ENCODE measurements at regions of chr9 and their contacts with region 1.

Region 1: GRCh38 chr9:6584881-6585597 is 60.5 kb downstream of the GLDC start:
- DNase-seq: no peak
- ATAC-seq: peak; percentile 54
- H3K4me3 Mint-ChIP-seq: no peak overlapping the region
- H3K27ac Mint-ChIP-seq: no peak overlapping the region
- H3K4me1 Mint-ChIP-seq: peaks cover 41% of the 10 kb centered on the region
- H3K27me3 Mint-ChIP-seq: no peaks in the 10 kb centered on the region
- CTCF ChIP-seq: no peak

Region 2: DNA sequence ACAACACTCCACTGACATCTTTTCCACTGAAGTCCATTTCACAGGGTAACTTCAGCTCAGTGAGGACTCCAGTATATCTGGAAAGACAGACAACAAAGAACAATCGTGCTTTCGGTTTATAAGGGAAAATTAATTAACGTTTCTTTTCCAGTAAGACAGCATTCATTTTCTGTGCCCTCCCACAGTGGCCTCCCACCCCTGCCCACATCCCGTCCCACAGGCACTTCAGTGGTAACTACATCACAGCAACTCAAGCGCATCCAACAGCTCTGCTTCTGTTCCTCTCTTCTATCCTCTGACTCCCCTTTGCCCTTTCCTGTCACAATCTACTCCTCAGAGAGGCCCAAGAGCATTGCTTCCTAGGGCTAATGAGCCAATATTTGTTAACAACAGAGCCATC is 20.2 kb after region 1 on chr9:
- CTCF ChIA-PET with region 1: no interaction called
- POLR2A ChIA-PET with region 1: no interaction called
- intact Hi-C with region 1: loop called (anchors 2 kb)
- DNase-seq: peak; percentile 23
- ATAC-seq: peak; percentile 100
- H3K4me3 Mint-ChIP-seq: peak overlapping the region; percentile 64
- H3K27ac Mint-ChIP-seq: peak overlapping the region; percentile 14
- H3K4me1 Mint-ChIP-seq: peaks cover 15% of the 10 kb centered on the region
- H3K27me3 Mint-ChIP-seq: no peaks in the 10 kb centered on the region
- CTCF ChIP-seq: no peak

Region 3: DNA sequence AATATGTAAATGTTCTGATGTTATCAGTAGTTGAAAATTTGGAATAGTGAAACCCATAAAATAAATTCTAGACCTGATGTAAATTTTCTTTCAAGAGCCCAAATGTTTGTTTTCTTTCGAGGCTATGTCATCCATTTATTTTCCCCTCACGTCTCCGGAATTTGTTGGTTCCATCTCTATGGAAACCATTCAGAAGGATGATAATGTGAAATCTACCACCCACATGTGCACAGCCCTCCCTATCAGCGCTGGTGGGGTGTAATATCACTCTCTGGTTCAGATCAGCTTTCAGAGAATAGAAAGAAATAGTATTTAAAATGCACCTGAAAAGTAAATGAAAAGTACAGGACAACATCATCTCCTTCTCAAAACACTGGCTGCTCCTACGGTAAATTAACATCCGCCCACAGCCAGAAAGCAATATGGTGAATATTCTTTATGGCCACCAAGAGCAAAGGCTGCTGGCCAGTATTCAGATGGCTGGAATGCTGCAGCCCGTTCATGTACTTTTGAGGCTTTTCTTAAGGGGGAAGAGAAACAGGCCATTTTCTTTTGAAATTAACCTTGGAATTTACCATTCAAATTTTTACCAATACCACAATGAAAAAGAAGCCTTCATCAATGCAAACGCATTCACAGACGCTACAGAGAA is 32.0 kb after region 1 on chr9:
- CTCF ChIA-PET with region 1: no interaction called
- POLR2A ChIA-PET with region 1: no interaction called
- intact Hi-C with region 1: no loop called
- DNase-seq: no peak
- ATAC-seq: no peak
- H3K4me3 Mint-ChIP-seq: no peak overlapping the region
- H3K27ac Mint-ChIP-seq: no peak overlapping the region
- H3K4me1 Mint-ChIP-seq: peaks cover 15% of the 10 kb centered on the region
- H3K27me3 Mint-ChIP-seq: peaks cover 2% of the 10 kb centered on the region
- CTCF ChIP-seq: no peak

Region 4: DNA sequence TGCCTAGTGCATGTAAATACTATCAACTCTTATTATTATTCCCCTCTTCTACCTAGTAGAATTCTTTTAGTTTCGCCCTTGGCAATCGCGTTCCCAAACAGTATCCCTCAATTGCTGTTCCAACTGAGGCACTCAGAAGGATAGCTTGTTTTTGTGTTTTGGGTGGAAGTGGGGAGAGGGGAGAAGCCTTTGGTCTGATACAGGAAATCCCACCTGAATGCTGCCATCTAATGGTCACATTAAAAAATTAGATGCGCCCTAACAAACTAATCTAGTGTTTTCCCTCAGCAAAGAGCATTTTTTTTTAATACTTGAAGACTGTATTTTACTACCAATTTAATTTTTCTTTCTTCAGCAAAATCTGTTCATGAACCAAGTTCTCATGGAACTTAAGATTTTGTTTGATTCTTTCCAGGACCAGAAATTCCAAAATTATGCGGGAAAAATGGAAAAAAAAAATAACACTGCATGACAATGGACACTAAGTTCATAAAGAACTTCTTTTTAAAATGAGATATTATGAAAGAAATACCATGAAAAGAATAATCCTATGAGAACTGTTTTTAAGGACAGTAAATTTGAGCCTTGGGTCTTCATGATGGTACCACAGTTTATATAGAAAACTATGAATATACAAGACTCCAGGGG is 82.7 kb after region 1 on chr9:
- CTCF ChIA-PET with region 1: interaction called, 43 read pairs
- POLR2A ChIA-PET with region 1: no interaction called
- intact Hi-C with region 1: loop called (anchors 1 kb)
- DNase-seq: no peak
- ATAC-seq: peak; percentile 50
- H3K4me3 Mint-ChIP-seq: no peak overlapping the region
- H3K27ac Mint-ChIP-seq: no peak overlapping the region
- H3K4me1 Mint-ChIP-seq: peaks cover 7% of the 10 kb centered on the region
- H3K27me3 Mint-ChIP-seq: no peaks in the 10 kb centered on the region
- CTCF ChIP-seq: no peak

Region 5: DNA sequence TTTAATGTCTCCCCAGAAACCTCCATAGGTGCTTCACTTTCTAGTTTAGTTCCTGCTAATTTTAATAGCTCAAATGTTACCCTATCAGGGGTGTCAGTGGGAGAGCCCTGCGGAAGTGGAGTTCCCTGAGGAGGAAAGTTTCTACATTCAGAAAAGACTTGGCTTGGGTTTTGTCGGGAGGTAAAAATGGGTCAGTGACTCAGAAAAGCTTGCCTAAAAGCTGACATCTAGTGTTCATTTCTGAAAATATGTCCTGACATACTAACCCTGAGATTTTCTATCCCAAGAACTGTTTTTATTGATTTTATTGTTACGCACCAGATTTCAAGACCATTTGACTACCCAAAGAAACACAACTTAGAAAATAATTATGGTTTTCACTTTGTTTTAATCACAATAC is 101.4 kb after region 1 on chr9:
- CTCF ChIA-PET with region 1: interaction called, 19 read pairs
- POLR2A ChIA-PET with region 1: interaction called, 11 read pairs
- intact Hi-C with region 1: loop called (anchors 1 kb)
- DNase-seq: no peak
- ATAC-seq: no peak
- H3K4me3 Mint-ChIP-seq: peak overlapping the region; percentile 50
- H3K27ac Mint-ChIP-seq: peak overlapping the region; percentile 84
- H3K4me1 Mint-ChIP-seq: peaks cover 75% of the 10 kb centered on the region
- H3K27me3 Mint-ChIP-seq: no peaks in the 10 kb centered on the region
- CTCF ChIP-seq: no peak

Region 6: DNA sequence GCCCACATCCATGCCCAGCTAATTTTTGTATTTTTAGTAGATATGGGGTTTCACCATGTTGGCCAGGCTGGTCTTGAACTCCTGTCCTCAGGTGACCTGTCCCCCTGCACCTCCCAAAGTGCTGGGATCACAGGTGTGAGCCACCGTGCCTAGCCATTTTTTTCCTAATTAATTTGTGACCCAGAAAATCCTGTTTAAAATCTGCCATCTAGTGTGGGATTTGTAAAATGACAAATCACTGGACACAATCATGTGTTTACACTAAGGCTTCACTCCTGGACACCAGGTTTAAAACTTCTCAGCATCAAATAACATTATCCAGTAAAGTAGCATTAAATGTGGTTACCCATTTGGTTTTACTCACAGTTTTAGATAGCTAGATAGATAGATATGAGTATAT is 154.2 kb after region 1 on chr9:
- CTCF ChIA-PET with region 1: interaction called, 16 read pairs
- POLR2A ChIA-PET with region 1: interaction called, 7 read pairs
- intact Hi-C with region 1: loop called (anchors 1 kb)
- DNase-seq: no peak
- ATAC-seq: no peak
- H3K4me3 Mint-ChIP-seq: no peak overlapping the region
- H3K27ac Mint-ChIP-seq: no peak overlapping the region
- H3K4me1 Mint-ChIP-seq: peaks cover 13% of the 10 kb centered on the region
- H3K27me3 Mint-ChIP-seq: no peaks in the 10 kb centered on the region
- CTCF ChIP-seq: no peak

Region 7: DNA sequence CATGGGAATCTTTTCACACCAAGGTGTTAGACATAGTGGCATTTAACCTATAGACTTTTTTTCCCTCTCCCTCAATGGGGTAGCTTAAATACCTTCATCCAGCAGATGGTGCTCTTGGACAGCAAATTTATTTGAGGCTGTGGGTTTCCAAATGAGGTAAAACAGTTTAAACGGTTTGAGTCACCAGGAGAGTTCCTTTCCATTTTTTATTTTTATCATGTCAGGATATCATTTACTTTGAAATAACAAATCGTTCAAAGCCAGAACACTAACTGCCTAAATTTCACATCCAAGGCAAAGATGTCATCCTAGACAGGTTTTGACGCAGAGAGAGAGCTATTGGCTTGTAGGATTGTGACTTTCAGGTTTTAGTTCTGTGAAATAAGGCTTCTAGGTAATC is 242.4 kb after region 1 on chr9:
- CTCF ChIA-PET with region 1: interaction called, 3 read pairs
- POLR2A ChIA-PET with region 1: no interaction called
- intact Hi-C with region 1: loop called (anchors 1 kb)
- DNase-seq: no peak
- ATAC-seq: peak; percentile 42
- H3K4me3 Mint-ChIP-seq: no peak overlapping the region
- H3K27ac Mint-ChIP-seq: no peak overlapping the region
- H3K4me1 Mint-ChIP-seq: peaks cover 14% of the 10 kb centered on the region
- H3K27me3 Mint-ChIP-seq: no peaks in the 10 kb centered on the region
- CTCF ChIP-seq: no peak

Region 8: DNA sequence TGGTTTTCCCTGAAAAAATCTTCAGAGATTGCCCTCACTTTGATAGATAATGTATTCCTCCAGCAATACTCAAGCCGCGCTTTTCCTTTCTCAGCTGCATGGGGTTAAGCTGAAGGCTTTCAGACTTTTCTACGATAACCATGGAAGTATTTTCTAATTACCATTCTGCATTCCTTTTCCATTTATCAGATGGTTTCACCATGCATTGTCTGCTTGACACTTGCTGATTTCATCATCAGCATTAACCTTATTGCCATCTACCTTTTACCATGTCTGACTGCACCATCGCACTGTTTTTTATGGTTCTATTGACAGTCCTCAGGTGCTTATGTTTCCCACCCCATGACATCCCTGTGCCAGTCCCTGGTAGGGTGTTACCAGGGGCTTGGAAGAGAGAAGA is 1122.9 kb after region 1 on chr9:
- CTCF ChIA-PET with region 1: no interaction called
- POLR2A ChIA-PET with region 1: no interaction called
- intact Hi-C with region 1: no loop called
- DNase-seq: no peak
- ATAC-seq: no peak
- H3K4me3 Mint-ChIP-seq: no peak overlapping the region
- H3K27ac Mint-ChIP-seq: no peak overlapping the region
- H3K4me1 Mint-ChIP-seq: no peaks in the 10 kb centered on the region
- H3K27me3 Mint-ChIP-seq: peaks cover 5% of the 10 kb centered on the region
- CTCF ChIP-seq: no peak

Measured in activated B cell treated with CpG ODN at 0.5 μM for 24 hours (primary cell).